ENCODE measurements at regions of chr12 and their contacts with region 1.

Region 1: DNA sequence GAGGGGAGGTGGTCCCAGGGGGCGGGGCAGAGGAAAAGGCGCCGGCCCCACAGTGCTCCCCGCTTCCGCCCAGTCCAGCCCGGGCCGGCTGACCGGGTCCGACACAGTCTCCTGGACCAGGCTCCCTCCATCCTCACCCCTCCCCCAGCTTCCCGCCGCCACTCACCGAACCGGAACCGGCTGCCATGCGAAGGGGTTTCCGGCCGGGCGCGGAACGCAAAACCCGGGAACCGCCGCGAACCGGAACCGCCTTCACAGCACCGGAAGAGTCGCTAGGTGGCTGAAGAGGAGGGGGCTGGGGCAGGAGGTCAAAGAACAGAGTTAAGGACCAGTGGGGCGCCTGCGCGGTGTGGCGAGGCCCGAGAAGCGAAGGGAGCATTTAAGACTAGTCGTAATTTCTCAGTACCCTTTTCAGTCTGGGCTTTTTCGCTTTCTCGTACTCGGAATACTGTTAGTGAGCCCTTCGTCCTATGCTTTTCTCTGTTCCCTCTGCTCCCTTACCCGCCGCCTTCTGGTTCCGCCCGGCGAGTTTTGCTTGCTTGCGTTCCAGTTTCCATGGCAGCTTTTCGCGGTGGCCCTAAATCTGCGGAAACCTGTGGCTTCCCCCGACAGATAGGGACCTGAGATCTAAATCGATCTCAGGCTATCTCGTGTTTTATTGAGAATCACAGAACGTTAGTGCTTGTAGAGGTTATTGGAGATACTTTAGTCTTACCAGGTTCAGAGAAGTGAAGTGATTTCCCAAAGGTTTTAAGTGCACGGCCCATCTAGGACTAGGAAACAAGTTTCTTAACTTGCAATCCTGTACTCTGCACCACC is at the start of gene SENP1:
- DNase-seq: peak; percentile 92
- ATAC-seq: peak; percentile 87
- H3K4me3 Mint-ChIP-seq: peak within 1 kb of the TSS; percentile 96
- H3K27ac Mint-ChIP-seq: peak within 1 kb of the TSS; percentile 93
- H3K4me1 Mint-ChIP-seq: peaks cover 53% of the 10 kb centered on the region
- H3K27me3 Mint-ChIP-seq: no peaks in the 10 kb centered on the region
- CTCF ChIP-seq: no peak
- total RNA-seq, gene SENP1: 39.8 to 40.2 TPM

Region 2: GRCh38 chr12:48078901-48079300 is 27.2 kb before region 1 on chr12:
- CTCF ChIA-PET with region 1: no interaction called
- POLR2A ChIA-PET with region 1: no interaction called
- intact Hi-C with region 1: no loop called
- DNase-seq: no peak
- ATAC-seq: no peak
- H3K4me3 Mint-ChIP-seq: no peak overlapping the region
- H3K27ac Mint-ChIP-seq: no peak overlapping the region
- H3K4me1 Mint-ChIP-seq: no peaks in the 10 kb centered on the region
- H3K27me3 Mint-ChIP-seq: no peaks in the 10 kb centered on the region
- CTCF ChIP-seq: no peak

Region 3: GRCh38 chr12:48118284-48118890 is 12.3 kb after region 1 on chr12:
- CTCF ChIA-PET with region 1: interaction called, 6 read pairs
- POLR2A ChIA-PET with region 1: interaction called, 10 read pairs
- intact Hi-C with region 1: no loop called
- DNase-seq: no peak
- ATAC-seq: no peak
- H3K4me3 Mint-ChIP-seq: peak overlapping the region; percentile 86
- H3K27ac Mint-ChIP-seq: no peak overlapping the region
- H3K4me1 Mint-ChIP-seq: peaks cover 14% of the 10 kb centered on the region
- H3K27me3 Mint-ChIP-seq: no peaks in the 10 kb centered on the region
- CTCF ChIP-seq: no peak

Region 4: DNA sequence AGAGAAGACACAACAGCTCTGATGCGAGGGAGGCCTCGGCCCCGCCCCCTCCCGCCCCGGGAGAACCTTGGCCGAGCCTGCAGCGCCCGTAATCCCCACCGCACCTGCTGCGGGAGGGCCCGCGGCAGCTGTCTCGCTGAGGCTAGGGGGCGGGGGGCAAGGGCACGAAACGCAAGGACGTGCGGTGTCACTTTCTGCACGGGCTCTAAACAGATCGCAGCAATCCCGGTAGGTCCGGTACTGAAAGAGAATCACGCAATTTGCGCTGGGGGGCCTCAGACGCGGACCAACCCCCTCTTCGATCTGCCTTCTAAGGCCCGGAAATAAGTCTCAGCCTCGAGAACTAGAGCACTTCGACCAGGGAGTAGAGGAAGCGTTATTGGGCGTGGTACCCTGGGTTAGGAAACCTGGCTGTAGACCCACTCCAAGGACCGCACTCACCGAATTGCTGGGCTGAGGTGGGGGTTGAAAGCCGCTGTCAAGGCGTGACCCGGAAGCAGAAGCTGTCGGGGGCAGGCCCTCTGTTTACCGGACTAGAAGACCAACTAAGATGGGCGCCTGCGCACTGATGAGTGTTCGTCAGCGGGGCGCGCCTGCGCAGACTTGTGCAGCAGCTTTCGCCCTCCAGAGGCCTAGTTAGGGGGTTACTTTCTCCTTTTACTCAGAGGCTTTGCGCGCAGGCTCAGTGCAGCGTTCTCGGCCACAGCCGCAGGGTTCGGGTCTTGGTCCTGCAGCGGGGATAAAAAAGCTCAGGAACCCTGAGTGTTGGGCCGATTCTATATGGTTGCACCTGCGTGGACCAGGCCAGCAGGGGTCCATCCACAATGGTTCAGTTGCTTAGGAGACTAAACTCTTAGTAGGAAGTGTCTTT is 51.2 kb after region 1 on chr12 and contains the start of gene ASB8:
- CTCF ChIA-PET with region 1: interaction called, 11 read pairs
- POLR2A ChIA-PET with region 1: interaction called, 25 read pairs
- intact Hi-C with region 1: loop called (anchors 2 kb)
- DNase-seq: peak; percentile 100
- ATAC-seq: peak; percentile 98
- H3K4me3 Mint-ChIP-seq: peak within 1 kb of the TSS; percentile 96
- H3K27ac Mint-ChIP-seq: peak within 1 kb of the TSS; percentile 96
- H3K4me1 Mint-ChIP-seq: peaks cover 28% of the 10 kb centered on the region
- H3K27me3 Mint-ChIP-seq: no peaks in the 10 kb centered on the region
- CTCF ChIP-seq: peak; percentile 59
- total RNA-seq, gene ASB8: 20.9 to 27.2 TPM

Region 5: DNA sequence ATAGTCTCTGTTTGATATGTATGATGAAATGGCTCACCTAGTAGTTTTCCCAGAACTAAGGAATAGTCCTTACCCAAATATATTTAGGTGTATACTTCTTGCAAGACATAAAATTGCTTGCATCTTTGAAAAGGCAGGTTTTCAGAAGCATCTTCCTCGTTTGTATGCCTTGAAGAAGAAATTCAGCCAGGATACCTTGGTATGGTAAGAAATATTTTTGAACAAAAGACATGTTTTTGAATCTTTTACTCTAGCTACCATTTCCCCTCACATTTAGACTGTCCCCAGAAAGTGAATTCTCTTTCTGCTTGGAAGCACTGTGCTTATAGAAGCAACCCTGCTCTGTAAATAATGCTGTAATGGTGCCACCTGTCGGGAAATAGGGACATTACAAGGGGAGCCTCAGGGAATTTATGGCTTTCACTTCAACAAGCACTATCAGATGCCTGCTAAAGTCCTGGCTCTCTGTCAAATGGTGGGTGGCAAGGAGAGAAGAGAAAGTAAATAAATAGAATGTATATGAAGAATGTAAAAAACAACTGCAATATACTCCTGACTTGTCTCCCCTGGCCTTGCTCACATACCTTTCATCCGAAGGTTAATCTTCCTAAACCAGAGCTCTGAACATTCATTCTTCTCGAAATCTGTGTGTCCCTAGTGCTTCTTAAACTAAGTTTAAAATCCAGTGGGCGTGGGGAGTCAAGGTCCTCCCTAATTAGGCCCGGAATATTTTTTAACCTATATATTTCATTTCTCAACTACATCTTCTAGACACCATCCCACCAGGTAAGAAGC is 83.5 kb after region 1 on chr12:
- CTCF ChIA-PET with region 1: interaction called, 12 read pairs
- POLR2A ChIA-PET with region 1: no interaction called
- intact Hi-C with region 1: no loop called
- DNase-seq: peak; percentile 86
- ATAC-seq: peak; percentile 89
- H3K4me3 Mint-ChIP-seq: no peak overlapping the region
- H3K27ac Mint-ChIP-seq: no peak overlapping the region
- H3K4me1 Mint-ChIP-seq: peaks cover 6% of the 10 kb centered on the region
- H3K27me3 Mint-ChIP-seq: peaks cover 23% of the 10 kb centered on the region
- CTCF ChIP-seq: peak; percentile 91

Region 6: DNA sequence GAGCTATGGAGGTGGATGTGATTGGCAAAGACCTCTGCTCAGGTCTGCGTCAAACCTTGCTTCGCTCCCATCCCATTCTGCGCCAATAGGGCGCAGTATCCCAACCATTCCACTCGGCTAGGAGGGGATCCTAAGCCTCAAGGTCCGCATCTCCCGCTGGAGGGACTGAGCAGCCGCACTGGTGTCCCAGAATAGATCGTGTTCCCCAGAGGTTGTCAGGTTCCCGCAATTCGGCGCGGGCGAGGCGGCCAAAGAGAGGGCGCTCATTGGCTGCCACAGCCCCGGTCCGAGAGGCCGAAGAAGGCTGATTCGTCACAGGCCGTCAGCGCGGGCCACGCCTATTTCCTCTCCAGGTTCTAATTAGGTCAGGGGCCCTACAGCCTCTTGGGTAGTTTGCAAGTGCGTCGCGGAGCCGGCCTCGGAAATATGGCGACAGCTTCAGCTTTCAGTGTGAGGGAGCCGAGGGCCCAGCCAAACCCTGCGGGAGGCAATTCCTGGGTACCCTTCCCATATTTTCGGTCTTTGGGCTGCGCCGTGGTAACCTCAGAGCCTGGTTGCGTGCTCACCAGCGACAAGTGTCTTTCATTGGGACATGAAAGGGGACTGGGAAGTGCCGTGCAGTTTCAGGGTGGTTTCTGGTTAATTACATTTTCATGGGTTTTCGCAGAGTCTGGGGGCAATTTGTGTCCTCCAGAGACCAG is 92.0 kb after region 1 on chr12:
- CTCF ChIA-PET with region 1: interaction called, 6 read pairs
- POLR2A ChIA-PET with region 1: interaction called, 11 read pairs
- intact Hi-C with region 1: no loop called
- DNase-seq: peak; percentile 98
- ATAC-seq: peak; percentile 98
- H3K4me3 Mint-ChIP-seq: peak overlapping the region; percentile 84
- H3K27ac Mint-ChIP-seq: peak overlapping the region; percentile 98
- H3K4me1 Mint-ChIP-seq: peaks cover 19% of the 10 kb centered on the region
- H3K27me3 Mint-ChIP-seq: peaks cover 3% of the 10 kb centered on the region
- CTCF ChIP-seq: no peak

Measured in activated CD8-positive, alpha-beta T cell treated with anti-CD3 and anti-CD28 coated beads for 36 hours (primary cell).